Right cardiac atrium (tissue), 5 donors: ENCODE measurements at regions of chr6 and their contacts with region 1.

Region 1: DNA sequence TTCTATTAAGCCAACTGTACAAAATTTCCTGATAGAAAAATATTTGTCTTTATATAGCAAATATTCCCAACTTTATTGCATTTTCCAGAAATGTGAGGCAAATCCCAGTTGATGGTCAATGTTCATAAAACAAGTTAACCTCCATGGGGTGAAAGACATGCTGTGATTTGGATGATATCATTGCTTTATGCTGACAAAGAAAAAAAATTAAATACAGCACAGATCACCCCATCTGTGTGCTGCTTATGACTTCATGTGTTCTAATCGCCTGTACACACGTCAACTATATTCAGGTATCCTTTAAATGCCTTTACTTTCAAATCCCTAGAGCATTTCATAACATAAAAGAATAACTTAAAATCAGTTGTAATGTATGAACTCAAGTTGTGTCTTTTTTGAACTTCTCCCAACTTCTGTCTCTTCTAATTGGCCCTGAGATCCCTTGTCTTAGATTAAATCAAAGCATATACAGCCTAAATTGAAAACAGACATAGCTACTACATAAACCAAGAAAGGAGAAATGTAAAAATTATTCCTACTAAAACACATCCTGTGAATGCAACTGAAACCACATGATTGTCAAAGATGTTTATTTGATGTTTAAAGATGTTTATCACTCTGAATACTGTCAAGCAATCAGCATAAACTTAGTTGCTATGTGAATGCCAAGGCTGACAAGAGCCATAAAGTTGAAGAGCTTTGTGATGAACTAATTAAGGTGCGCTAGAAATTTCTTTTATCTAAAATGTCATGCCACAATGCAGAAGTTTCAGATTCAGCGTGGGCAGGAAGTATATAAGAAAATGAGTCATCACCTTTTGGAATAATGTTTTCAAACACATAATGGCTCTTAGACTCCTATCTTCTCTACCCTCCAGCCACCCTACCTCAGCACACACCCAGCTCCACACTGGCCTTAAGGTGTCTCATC is 68.7 kb downstream of the FILIP1 start:
- DNase-seq: no peak
- ATAC-seq: no peak
- H3K4me3 ChIP-seq: no peak overlapping the region
- H3K27ac ChIP-seq: no peak overlapping the region
- H3K4me1 ChIP-seq: peaks cover 14% of the 10 kb centered on the region
- H3K27me3 ChIP-seq: no peaks in the 10 kb centered on the region

Region 2: DNA sequence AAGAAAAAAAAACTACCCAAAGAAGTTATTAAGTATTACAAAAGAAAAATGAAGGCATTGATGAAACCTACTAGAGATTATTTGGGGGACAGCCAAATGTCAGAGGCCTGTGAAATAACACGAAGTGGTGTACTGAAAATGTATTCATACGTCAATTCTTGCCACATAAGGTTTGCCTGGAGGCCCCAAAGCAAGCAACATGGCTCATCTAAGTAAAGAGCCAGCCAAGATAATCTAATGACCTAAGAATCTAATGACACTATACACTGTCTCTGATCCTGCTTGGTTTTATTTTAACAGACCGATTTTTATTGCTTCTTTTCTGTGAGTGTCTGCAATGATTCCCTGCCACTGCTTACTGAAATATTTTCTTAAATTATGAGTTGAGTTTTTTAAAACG is 34.0 kb after region 1 on chr6:
- intact Hi-C with region 1: no loop called
- DNase-seq: peak in 1 of 3 donors; percentile 30
- ATAC-seq: peak; percentile 82 to 89
- H3K4me3 ChIP-seq: no peak overlapping the region
- H3K27ac ChIP-seq: no peak overlapping the region
- H3K4me1 ChIP-seq: peaks cover 10% of the 10 kb centered on the region
- H3K27me3 ChIP-seq: no peaks in the 10 kb centered on the region

Region 3: GRCh38 chr6:75488033-75488432 is 63.1 kb after region 1 on chr6:
- intact Hi-C with region 1: loop called in 3 of 4 experiments (anchors 10 kb)
- DNase-seq: no peak
- ATAC-seq: peak; percentile 38 to 42
- H3K4me3 ChIP-seq: peak overlapping the region; percentile 25
- H3K27ac ChIP-seq: peak overlapping the region; percentile 56
- H3K4me1 ChIP-seq: peaks cover 2% of the 10 kb centered on the region
- H3K27me3 ChIP-seq: no peaks in the 10 kb centered on the region